ENCODE measurements at regions of chr15 and their contacts with region 1.

Region 1: GRCh38 chr15:45391746-45392583 is 13.6 kb upstream of the GATM start:
- DNase-seq: no peak
- H3K4me3 ChIP-seq: no peak overlapping the region
- H3K27ac ChIP-seq: no peak overlapping the region
- H3K4me1 ChIP-seq: peaks cover 3% of the 10 kb centered on the region
- H3K27me3 ChIP-seq: no peaks in the 10 kb centered on the region
- CTCF ChIP-seq: no peak

Region 2: GRCh38 chr15:45307230-45307924 is 84.6 kb before region 1 on chr15:
- CTCF ChIA-PET with region 1: no interaction called
- dilution Hi-C with region 1: no loop called
- in situ Hi-C with region 1: loop called in 1 of 2 experiments (anchors 5 kb)
- intact Hi-C with region 1: no loop called
- DNase-seq: peak; percentile 40
- H3K4me3 ChIP-seq: peak overlapping the region in 1 of 3 experiments; percentile 19
- H3K27ac ChIP-seq: no peak overlapping the region
- H3K4me1 ChIP-seq: no peaks in the 10 kb centered on the region
- H3K27me3 ChIP-seq: no peaks in the 10 kb centered on the region
- CTCF ChIP-seq: peak; percentile 30 to 53